Psoas muscle (tissue), 8 donors: ENCODE measurements at regions of chr15 and their contacts with region 1.

Region 1: GRCh38 chr15:57146506-57147201 is 228.2 kb downstream of the TCF12 start:
- DNase-seq: no peak
- ATAC-seq: peak in 3 of 4 donors; percentile 51 to 67 (median 59)
- H3K4me3 ChIP-seq: peak overlapping the region; percentile 44
- H3K27ac ChIP-seq: no peak overlapping the region
- H3K4me1 ChIP-seq: peaks cover 41% of the 10 kb centered on the region
- H3K27me3 ChIP-seq: no peaks in the 10 kb centered on the region
- CTCF ChIP-seq: peak; percentile 75

Region 2: GRCh38 chr15:56821721-56822425 is 324.8 kb before region 1 on chr15:
- intact Hi-C with region 1: loop called in 1 of 2 experiments (anchors 10 kb)
- DNase-seq: peak; percentile 29 to 71
- ATAC-seq: peak; percentile 59 to 91 (median 78)
- H3K4me3 ChIP-seq: no peak overlapping the region
- H3K27ac ChIP-seq: no peak overlapping the region
- H3K4me1 ChIP-seq: peaks cover 24% of the 10 kb centered on the region
- H3K27me3 ChIP-seq: no peaks in the 10 kb centered on the region
- CTCF ChIP-seq: peak; percentile 62

Region 3: GRCh38 chr15:56964182-56964581 is 182.5 kb before region 1 on chr15:
- intact Hi-C with region 1: no loop called
- DNase-seq: no peak
- ATAC-seq: peak in 1 of 4 donors; percentile 63
- H3K4me3 ChIP-seq: no peak overlapping the region
- H3K27ac ChIP-seq: no peak overlapping the region
- H3K4me1 ChIP-seq: peaks cover 41% of the 10 kb centered on the region
- H3K27me3 ChIP-seq: no peaks in the 10 kb centered on the region
- CTCF ChIP-seq: no peak

Region 4: DNA sequence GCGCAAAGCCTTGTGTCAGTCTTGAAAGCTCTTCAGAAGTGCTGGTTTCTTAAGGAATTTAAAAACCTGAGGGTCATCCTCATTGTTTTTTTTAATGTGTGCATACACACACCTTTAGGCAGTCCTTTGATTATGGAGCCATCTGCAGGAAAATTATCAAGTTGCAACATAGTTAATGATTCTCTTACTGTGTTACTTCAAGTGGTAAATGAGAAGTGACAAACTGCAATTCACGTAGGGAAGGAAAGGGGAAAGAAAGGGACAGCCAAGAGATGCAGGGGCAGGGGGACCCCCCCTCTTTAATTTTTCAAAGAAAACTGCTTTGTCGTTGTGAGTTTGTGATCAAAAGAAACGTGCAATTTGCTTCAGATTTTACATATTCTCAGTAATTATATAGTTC is 67.2 kb after region 1 on chr15:
- intact Hi-C with region 1: loop called (anchors 2 to 5 kb)
- DNase-seq: no peak
- ATAC-seq: peak in 3 of 4 donors; percentile 47 to 77 (median 59)
- H3K4me3 ChIP-seq: no peak overlapping the region
- H3K27ac ChIP-seq: no peak overlapping the region
- H3K4me1 ChIP-seq: peaks cover 24% of the 10 kb centered on the region
- H3K27me3 ChIP-seq: no peaks in the 10 kb centered on the region
- CTCF ChIP-seq: peak; percentile 54

Region 5: DNA sequence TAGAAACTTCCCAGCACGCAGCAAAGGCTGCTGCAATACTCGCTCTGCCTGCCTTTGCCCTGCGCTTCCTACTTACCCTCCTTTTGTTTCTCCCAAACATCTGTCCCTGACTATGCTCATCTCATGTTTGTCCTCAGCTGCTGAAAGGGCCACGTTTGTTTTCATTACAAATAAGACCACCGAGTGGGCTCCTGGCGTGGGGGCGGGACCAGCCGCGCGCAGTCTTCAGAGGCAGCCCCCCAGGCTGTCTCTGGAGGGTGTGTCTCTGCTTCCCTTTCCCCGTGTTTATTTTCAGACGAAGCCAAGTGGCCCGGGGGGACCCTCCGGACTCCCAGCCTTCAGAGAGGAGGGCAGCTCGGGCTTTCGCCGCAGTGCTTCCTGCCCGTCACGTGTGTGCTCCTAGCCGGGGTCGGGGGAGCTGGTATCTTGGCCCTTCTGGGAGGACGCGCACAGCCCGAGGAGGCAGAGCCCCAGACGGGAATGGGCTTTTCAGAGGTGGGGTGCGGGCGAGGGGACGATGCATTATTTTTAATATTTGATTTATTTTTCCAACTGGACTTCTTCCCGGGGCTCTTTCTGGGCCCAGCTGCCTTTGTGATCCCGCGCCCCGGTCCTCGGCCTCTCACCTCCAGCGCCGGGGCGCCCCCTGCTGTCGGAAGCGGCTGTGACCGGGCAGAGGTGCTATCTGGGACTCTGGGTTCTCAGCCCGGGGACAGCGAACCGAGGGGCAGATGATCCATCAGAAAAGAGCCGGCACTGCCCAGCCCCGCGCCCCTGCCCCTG is 159.7 kb after region 1 on chr15:
- intact Hi-C with region 1: loop called (anchors 2 to 5 kb)
- DNase-seq: peak; percentile 87 to 94
- ATAC-seq: peak; percentile 86 to 97 (median 90)
- H3K4me3 ChIP-seq: peak overlapping the region; percentile 78
- H3K27ac ChIP-seq: no peak overlapping the region
- H3K4me1 ChIP-seq: peaks cover 5% of the 10 kb centered on the region
- H3K27me3 ChIP-seq: no peaks in the 10 kb centered on the region
- CTCF ChIP-seq: peak; percentile 90

Region 6: GRCh38 chr15:57364282-57365007 is 217.8 kb after region 1 on chr15:
- intact Hi-C with region 1: no loop called
- DNase-seq: no peak
- ATAC-seq: no peak
- H3K4me3 ChIP-seq: no peak overlapping the region
- H3K27ac ChIP-seq: no peak overlapping the region
- H3K4me1 ChIP-seq: no peaks in the 10 kb centered on the region
- H3K27me3 ChIP-seq: no peaks in the 10 kb centered on the region
- CTCF ChIP-seq: no peak

Region 7: DNA sequence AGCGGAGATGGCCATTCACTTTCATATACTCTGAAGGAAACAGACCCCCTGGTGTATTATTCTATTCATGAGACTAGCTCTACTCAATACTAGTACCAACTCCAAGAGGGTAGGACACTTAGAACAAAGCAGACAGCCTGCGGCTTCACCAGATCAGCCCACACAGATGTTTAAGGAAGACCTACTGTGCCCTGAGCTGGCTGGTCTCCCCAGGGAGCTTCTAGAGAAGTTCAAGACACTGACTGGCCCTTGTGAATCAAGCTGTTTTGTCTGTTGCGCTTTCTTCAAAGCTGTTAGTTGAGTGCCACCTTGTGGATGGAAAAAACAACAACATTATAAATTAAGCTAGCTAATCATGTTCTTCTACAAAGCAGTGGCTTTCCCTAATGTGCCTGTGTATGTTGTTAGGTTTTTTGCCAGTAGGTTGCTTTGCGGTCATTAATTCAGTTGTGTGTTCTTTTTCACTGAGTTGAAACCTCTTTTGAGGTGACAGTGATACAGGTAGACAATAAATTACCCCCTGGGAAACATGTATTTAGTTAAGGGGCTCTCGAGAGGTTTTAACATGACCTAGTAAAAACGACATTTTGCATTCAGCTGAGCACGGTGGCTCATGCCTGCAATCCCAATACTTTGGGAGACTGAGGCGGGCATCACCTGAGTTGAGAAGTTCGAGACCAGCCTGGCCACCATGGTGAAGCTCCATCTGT is 380.9 kb after region 1 on chr15:
- intact Hi-C with region 1: loop called in 1 of 2 experiments (anchors 10 kb)
- DNase-seq: no peak
- ATAC-seq: peak; percentile 70 to 88 (median 75)
- H3K4me3 ChIP-seq: no peak overlapping the region
- H3K27ac ChIP-seq: no peak overlapping the region
- H3K4me1 ChIP-seq: no peaks in the 10 kb centered on the region
- H3K27me3 ChIP-seq: no peaks in the 10 kb centered on the region
- CTCF ChIP-seq: peak; percentile 71

Region 8: GRCh38 chr15:58628206-58628947 is 1481.7 kb after region 1 on chr15:
- intact Hi-C with region 1: no loop called
- DNase-seq: no peak
- ATAC-seq: no peak
- H3K4me3 ChIP-seq: peak overlapping the region; percentile 52
- H3K27ac ChIP-seq: peak overlapping the region; percentile 46
- H3K4me1 ChIP-seq: peaks cover 17% of the 10 kb centered on the region
- H3K27me3 ChIP-seq: no peaks in the 10 kb centered on the region
- CTCF ChIP-seq: no peak